ENCODE measurements at regions of chr6 and their contacts with region 1.

Region 1: GRCh38 chr6:117976030-117976651 is 69.1 kb downstream of the SLC35F1 start:
- DNase-seq: no peak
- ATAC-seq: no peak

Region 2: DNA sequence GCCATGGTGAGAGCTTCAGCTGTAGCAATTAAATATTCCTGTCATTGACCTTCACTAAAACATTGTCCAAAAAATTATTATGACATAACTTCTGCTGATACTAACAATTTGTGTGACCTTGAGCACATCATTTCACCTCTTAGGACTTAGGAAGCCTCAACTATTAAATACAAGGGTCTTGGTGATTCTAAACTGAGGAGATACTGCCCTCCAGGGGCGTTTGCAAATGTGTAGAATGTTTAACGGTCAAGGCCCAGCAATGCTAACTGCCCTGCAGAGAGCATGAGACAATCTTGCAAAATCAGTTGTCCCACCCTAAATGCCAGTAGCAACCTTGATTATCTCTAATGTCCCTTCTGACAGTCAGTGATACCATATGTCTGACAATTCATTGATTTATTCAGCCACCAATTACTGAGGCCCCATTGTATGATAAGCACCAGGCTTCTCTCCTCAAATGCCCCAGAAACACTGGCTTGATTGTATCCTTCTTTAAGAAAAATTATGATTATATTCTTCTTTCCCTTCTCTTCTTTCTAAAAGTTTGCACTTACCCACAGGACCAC is 287.9 kb after region 1 on chr6:
- intact Hi-C with region 1: loop called (anchors 2 to 10 kb)
- DNase-seq: no peak
- ATAC-seq: peak; percentile 80 to 81

Measured in left cardiac atrium (tissue), 4 donors.